GM12878 (cell line): ENCODE measurements at regions of chr2 and their contacts with region 1.

Region 1: GRCh38 chr2:130372055-130372832 is 16.4 kb downstream of the PTPN18 start:
- DNase-seq: no peak
- ATAC-seq: peak; percentile 87
- H3K4me3 ChIP-seq: peak overlapping the region; percentile 94
- H3K27ac ChIP-seq: peak overlapping the region; percentile 90
- H3K4me1 ChIP-seq: peaks cover 31% of the 10 kb centered on the region
- H3K27me3 ChIP-seq: no peaks in the 10 kb centered on the region
- CTCF ChIP-seq: peak; percentile 77 to 87 (median 78)
- EP300 ChIP-seq: peak in 1 of 2 experiments; percentile 31; a peak in 1 of 4 replicates
- POLR2A ChIP-seq: peak; percentile 91
- RAD21 ChIP-seq: peak; percentile 32; the same call in 1 of the 2 replicates

Region 2: DNA sequence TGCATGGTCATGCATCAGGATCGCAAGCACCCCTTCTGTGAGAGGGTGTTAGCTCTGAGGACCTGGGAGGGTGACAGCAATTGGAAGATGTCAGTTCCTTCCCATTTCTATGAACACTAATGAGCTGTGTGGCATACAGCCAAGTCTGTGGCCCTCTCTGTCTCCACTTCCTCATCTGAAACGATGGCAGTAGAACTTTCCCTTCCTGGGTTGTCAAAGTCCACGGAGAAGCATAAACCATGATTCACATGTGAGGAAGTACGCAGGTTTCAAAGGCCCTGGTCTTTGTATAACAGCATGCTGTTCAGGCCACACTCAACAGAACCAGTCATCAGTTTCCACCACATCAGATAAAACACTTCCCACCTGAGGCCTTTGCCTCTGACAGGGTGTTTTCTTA is 560.2 kb before region 1 on chr2:
- CTCF ChIA-PET with region 1: no interaction called
- POLR2A ChIA-PET with region 1: no interaction called
- RAD21 ChIA-PET with region 1: no interaction called
- SMC1A ChIA-PET with region 1: no interaction called
- in situ Hi-C with region 1: no loop called
- intact Hi-C with region 1: no loop called
- DNase-seq: peak; percentile 33
- ATAC-seq: peak; percentile 81
- H3K4me3 ChIP-seq: no peak overlapping the region
- H3K27ac ChIP-seq: no peak overlapping the region
- H3K4me1 ChIP-seq: no peaks in the 10 kb centered on the region
- H3K27me3 ChIP-seq: no peaks in the 10 kb centered on the region
- CTCF ChIP-seq: no peak
- EP300 ChIP-seq: no peak
- POLR2A ChIP-seq: no peak
- RAD21 ChIP-seq: no peak

Region 3: DNA sequence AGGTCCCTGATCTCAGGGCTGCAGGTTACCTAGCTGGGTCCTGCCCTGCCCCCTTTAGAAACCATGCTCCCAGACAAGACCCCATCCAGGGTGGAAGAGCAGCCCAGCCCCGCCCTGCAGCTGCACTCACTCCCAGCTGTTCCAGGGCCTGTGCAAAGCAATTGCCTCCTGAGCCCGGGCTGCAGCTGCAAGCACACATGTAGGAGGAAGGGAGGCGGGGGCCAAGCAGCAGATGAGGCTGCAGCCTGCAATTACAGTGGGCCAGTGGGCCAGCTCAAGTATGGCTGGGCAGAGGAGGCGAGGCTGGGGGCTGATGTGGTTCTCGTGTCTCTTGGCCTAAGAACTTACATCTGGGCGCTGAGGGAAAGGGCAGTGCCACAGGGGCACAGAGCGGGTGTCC is 108.6 kb before region 1 on chr2:
- CTCF ChIA-PET with region 1: no interaction called
- POLR2A ChIA-PET with region 1: no interaction called
- RAD21 ChIA-PET with region 1: no interaction called
- SMC1A ChIA-PET with region 1: no interaction called
- in situ Hi-C with region 1: no loop called
- intact Hi-C with region 1: no loop called
- DNase-seq: no peak
- ATAC-seq: no peak
- H3K4me3 ChIP-seq: no peak overlapping the region
- H3K27ac ChIP-seq: no peak overlapping the region
- H3K4me1 ChIP-seq: no peaks in the 10 kb centered on the region
- H3K27me3 ChIP-seq: no peaks in the 10 kb centered on the region; a peak in 1 of 4 replicates
- CTCF ChIP-seq: no peak
- EP300 ChIP-seq: no peak
- POLR2A ChIP-seq: no peak
- RAD21 ChIP-seq: no peak

Region 4: DNA sequence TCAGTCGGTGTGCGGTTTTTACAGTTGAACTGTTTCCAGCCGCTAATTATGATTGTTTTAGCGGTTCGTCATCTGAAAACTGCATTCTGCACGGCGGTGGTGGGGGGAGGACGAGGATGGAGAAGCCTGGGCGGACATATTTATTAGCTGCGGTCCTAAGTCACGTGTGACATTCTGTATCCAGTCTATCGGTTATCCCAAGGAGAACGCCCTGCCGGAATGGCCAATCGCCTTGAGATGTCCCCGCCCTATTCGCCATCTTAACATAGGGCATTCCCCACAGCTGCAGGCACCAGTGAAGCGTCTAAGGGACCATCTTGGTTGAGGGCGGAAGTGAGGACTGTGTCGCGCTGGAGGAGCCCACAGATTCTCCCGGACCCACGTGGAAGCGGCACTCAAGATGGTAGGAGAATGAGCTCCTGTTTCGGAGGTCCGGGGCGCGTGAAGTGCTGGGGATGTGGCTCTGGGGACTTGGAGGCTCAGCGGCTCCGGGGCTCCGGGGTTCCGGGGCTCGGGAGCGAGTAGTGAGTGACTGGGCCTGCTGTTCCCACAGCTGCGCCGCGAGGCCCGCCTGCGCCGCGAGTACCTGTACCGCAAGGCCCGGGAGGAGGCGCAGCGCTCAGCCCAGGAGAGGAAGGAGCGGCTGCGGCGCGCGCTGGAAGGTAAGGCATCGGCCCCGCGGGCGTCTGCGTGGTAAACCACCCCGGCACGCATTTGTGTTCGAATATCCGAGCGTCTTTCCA is 29.5 kb before region 1 on chr2 and contains the start of gene IMP4:
- CTCF ChIA-PET with region 1: interaction called, 34 read pairs
- POLR2A ChIA-PET with region 1: interaction called, 10 read pairs
- RAD21 ChIA-PET with region 1: interaction called, 34 read pairs
- SMC1A ChIA-PET with region 1: interaction called, 19 read pairs
- in situ Hi-C with region 1: no loop called
- intact Hi-C with region 1: loop called (anchors 1 kb)
- DNase-seq: peak; percentile 99
- ATAC-seq: peak; percentile 92
- H3K4me3 ChIP-seq: peak within 1 kb of the TSS; percentile 67
- H3K27ac ChIP-seq: peak within 1 kb of the TSS; percentile 81
- H3K4me1 ChIP-seq: peaks cover 21% of the 10 kb centered on the region
- H3K27me3 ChIP-seq: no peaks in the 10 kb centered on the region
- CTCF ChIP-seq: peak; percentile 27 to 45 (median 29); a peak in 4 of 6 replicates
- EP300 ChIP-seq: no peak
- POLR2A ChIP-seq: peak; percentile 85
- RAD21 ChIP-seq: no peak
- polyA plus RNA-seq, gene IMP4: 41.4 to 100 TPM

Region 5: DNA sequence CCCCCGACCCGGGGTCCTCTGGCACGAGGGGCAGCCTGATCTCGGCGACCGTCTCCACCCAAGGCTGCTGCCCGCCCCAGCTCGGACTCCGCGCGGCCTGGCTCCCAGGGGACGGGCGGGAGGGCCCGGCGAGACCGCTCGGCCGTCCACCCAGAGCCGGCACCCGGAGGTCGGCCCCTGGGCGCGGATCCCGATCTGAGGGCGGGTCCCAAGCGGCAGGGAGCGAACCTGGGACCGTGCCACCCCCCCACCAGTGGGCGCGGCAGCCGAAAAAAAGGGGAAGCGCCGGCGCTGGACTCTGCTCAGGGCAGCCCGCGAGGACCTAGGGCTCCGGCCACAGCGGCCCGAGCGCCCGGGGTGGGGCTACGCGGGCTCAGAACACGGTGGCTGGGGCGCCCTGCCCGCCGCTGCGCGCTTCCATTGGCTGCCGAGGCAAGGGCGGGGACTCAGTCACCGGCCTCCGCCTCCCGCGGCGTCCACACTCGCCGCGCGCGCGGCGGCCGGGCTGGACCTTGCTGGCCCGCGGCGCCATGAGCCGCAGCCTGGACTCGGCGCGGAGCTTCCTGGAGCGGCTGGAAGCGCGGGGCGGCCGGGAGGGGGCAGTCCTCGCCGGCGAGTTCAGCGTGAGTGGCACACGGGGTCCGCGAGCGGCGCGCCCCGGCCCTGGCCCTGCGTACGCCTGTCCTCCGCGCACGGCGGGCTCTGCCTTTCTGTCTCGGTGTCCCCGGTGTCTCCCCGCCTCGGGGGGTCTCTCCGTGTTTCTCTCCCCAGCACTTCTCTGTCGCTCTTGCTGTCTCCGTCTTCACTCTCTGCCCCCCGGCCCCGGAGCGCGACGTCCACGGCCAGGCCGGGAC is 16.4 kb before region 1 on chr2 and contains the start of gene PTPN18:
- CTCF ChIA-PET with region 1: interaction called, 8 read pairs
- POLR2A ChIA-PET with region 1: interaction called, 4 read pairs
- RAD21 ChIA-PET with region 1: interaction called, 4 read pairs
- SMC1A ChIA-PET with region 1: interaction called, 4 read pairs
- in situ Hi-C with region 1: no loop called
- intact Hi-C with region 1: loop called (anchors 2 kb)
- DNase-seq: no peak
- ATAC-seq: peak; percentile 97
- H3K4me3 ChIP-seq: peak within 1 kb of the TSS; percentile 82
- H3K27ac ChIP-seq: no peak within 1 kb of the TSS
- H3K4me1 ChIP-seq: peaks cover 18% of the 10 kb centered on the region
- H3K27me3 ChIP-seq: no peaks in the 10 kb centered on the region
- CTCF ChIP-seq: peak; percentile 30 to 46 (median 34); a peak in 4 of 6 replicates
- EP300 ChIP-seq: no peak
- POLR2A ChIP-seq: peak; percentile 68
- RAD21 ChIP-seq: peak; percentile 49
- polyA plus RNA-seq, gene PTPN18: 14.8 to 17.5 TPM

Region 6: GRCh38 chr2:130385709-130386108 is 13.5 kb after region 1 on chr2:
- CTCF ChIA-PET with region 1: interaction called, 14 read pairs
- POLR2A ChIA-PET with region 1: interaction called, 9 read pairs
- RAD21 ChIA-PET with region 1: interaction called, 6 read pairs
- SMC1A ChIA-PET with region 1: interaction called, 25 read pairs
- in situ Hi-C with region 1: no loop called
- intact Hi-C with region 1: loop called (anchors 2 kb)
- DNase-seq: no peak
- ATAC-seq: peak; percentile 71
- H3K4me3 ChIP-seq: no peak overlapping the region
- H3K27ac ChIP-seq: peak overlapping the region; percentile 60
- H3K4me1 ChIP-seq: peaks cover 53% of the 10 kb centered on the region
- H3K27me3 ChIP-seq: no peaks in the 10 kb centered on the region
- CTCF ChIP-seq: no peak
- EP300 ChIP-seq: no peak
- POLR2A ChIP-seq: no peak
- RAD21 ChIP-seq: no peak

Region 7: GRCh38 chr2:130391058-130391871 is 19.0 kb after region 1 on chr2:
- CTCF ChIA-PET with region 1: interaction called, 14 read pairs
- POLR2A ChIA-PET with region 1: interaction called, 9 read pairs
- RAD21 ChIA-PET with region 1: interaction called, 6 read pairs
- SMC1A ChIA-PET with region 1: interaction called, 25 read pairs
- in situ Hi-C with region 1: no loop called
- intact Hi-C with region 1: loop called (anchors 2 kb)
- DNase-seq: no peak
- ATAC-seq: peak; percentile 96
- H3K4me3 ChIP-seq: peak overlapping the region; percentile 79
- H3K27ac ChIP-seq: peak overlapping the region; percentile 64
- H3K4me1 ChIP-seq: peaks cover 38% of the 10 kb centered on the region
- H3K27me3 ChIP-seq: no peaks in the 10 kb centered on the region
- CTCF ChIP-seq: no peak
- EP300 ChIP-seq: no peak
- POLR2A ChIP-seq: peak; percentile 58
- RAD21 ChIP-seq: no peak